Activated B cell treated with CpG ODN at 0.5 μM for 24 hours (primary cell): ENCODE measurements at regions of chr4 and their contacts with region 1.

Region 1: DNA sequence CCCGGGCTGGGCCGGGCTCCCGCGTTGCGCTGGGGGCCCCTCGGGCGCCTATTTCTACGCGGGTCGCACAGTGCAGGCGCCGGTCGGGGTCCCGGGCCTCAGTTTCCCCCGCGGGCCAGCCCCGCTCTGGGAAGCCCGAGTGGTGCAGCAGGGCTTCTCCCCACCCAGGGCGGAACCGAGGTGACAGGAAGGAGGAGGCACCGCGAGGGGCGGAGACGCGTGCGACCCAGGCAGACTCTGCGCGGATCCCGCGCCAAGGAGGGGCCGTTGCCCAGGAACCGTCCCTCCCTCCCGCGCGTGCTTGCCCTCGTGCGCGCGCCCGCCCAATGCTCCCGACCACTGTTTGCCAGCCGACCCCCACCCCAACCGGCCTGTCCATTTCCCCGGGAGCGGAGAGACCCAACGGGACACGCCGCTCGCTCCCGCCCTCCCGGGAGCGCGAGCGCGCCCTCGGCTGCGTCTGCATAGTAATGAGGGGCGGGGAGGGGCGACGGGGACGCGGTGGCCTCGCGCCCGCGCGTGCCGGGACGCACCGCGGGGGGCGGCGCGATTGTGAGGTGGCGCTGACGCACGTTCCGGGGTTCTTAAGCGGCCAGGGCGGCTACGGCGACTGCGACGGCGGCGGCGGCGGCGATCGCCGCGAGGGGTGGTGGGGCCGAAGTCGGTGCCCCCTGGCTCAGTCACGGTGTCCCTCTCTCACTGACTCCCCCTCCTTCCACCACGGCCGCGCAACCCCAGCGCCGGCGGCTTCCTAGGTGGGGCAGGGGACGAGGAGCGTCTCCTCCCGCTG is at the start of gene CPEB2:
- DNase-seq: peak; percentile 92
- ATAC-seq: peak; percentile 69
- H3K4me3 Mint-ChIP-seq: peak within 1 kb of the TSS; percentile 93
- H3K27ac Mint-ChIP-seq: peak within 1 kb of the TSS; percentile 96
- H3K4me1 Mint-ChIP-seq: peaks cover 23% of the 10 kb centered on the region
- H3K27me3 Mint-ChIP-seq: no peaks in the 10 kb centered on the region
- CTCF ChIP-seq: no peak
- total RNA-seq, gene CPEB2: 6.9 and 7.2 TPM in 2 replicates

Region 2: DNA sequence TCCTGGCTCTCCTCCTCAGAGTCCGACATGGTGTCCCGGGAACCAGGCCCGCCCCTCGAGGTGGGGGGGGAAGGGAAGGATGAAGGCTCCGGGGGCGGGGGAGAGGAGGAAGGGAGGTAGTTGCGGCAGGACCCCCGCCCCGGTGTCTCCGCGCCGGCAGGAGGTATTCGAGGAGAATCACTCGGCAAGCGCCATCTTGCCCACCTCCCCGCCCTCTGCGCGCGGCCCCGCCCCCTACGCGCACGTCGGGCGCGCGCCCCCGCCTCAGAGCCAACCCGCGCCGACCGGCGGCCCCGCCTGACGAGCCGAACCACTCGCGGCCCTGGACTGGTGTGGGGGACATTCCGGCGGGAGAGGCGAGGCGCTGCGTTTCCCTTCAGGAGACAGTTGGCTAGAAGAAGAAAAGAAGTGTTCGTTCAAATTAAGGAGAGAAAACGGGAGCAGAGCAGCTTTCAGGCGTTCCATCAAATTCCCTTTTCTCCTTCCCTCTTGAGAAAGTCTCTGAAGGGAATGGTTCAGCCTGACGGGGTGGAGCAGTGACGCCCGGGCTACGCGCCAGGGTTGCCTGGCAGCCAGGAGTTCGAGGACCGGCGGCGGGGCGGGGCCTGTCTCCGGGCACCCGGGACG is 1517.8 kb before region 1 on chr4 and contains the start of gene RAB28:
- CTCF ChIA-PET with region 1: no interaction called
- POLR2A ChIA-PET with region 1: no interaction called
- intact Hi-C with region 1: loop called (anchors 1 kb)
- DNase-seq: peak; percentile 93
- ATAC-seq: peak; percentile 93
- H3K4me3 Mint-ChIP-seq: peak within 1 kb of the TSS; percentile 96
- H3K27ac Mint-ChIP-seq: peak within 1 kb of the TSS; percentile 99
- H3K4me1 Mint-ChIP-seq: peaks cover 21% of the 10 kb centered on the region
- H3K27me3 Mint-ChIP-seq: peaks cover 14% of the 10 kb centered on the region
- CTCF ChIP-seq: no peak
- total RNA-seq, gene RAB28: 16.0 and 16.9 TPM in 2 replicates

Region 3: DNA sequence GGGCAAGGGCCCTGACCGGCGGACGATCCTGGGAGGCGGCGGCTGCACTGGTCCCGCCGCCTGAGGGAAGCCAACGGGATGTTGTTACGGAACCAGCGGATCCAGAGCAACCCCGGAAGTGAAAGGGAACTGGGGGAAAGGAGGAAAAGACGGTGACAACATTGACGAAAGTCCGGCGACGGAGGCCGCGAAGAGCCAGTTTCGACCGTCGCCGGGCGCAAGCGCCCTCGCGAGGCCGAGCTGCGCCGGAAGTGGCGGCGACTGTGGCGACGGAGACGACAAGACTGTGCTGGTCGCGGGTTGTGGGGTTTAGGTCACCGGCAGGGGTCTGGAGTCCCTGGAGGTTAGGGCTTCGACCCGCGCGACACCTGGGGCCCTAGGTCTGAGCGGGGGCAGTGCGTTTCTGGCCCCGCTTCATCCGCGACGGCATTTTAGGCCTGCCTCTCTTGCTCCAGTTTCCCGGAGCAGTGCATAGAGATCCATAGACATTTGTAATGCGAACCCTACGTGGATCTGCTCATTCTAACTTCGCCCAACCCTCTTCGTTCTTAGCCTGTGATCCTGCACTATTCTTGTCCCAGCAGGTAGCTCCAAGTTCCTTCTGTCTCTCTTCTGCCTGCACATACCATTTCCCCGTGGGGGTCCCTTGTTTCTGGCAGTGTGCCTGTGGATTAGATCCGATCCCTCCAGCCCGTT is 1374.3 kb before region 1 on chr4 and contains the start of gene BOD1L1:
- CTCF ChIA-PET with region 1: no interaction called
- POLR2A ChIA-PET with region 1: interaction called, 9 read pairs
- intact Hi-C with region 1: loop called (anchors 1 kb)
- DNase-seq: peak; percentile 80
- ATAC-seq: peak; percentile 86
- H3K4me3 Mint-ChIP-seq: peak within 1 kb of the TSS; percentile 98
- H3K27ac Mint-ChIP-seq: peak within 1 kb of the TSS; percentile 97
- H3K4me1 Mint-ChIP-seq: peaks cover 53% of the 10 kb centered on the region
- H3K27me3 Mint-ChIP-seq: no peaks in the 10 kb centered on the region
- CTCF ChIP-seq: no peak
- total RNA-seq, gene BOD1L1: 77.1 and 79.3 TPM in 2 replicates

Region 4: DNA sequence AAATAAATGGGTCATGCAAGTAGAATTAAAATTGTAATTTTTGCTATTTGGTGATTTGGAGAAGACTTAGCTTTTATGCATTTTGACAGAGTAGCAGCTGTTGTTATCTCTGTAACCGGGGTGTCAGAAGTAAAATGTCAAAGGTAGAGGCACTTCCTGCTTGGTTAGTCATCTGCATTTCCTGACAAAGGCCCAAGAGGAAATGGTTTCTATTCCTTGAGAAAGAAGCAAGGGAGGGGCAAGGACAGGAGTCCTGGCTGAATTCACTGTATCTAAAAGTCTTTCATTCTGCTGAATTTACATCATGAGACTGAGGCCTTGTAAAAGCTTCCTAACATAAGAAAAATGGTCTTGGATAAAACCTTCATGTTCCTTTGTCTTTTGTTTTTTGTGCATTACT is 823.6 kb before region 1 on chr4:
- CTCF ChIA-PET with region 1: no interaction called
- POLR2A ChIA-PET with region 1: interaction called, 3 read pairs
- intact Hi-C with region 1: loop called (anchors 1 kb)
- DNase-seq: no peak
- ATAC-seq: peak; percentile 62
- H3K4me3 Mint-ChIP-seq: peak overlapping the region; percentile 67
- H3K27ac Mint-ChIP-seq: peak overlapping the region; percentile 89
- H3K4me1 Mint-ChIP-seq: peaks cover 85% of the 10 kb centered on the region
- H3K27me3 Mint-ChIP-seq: no peaks in the 10 kb centered on the region
- CTCF ChIP-seq: no peak

Region 5: DNA sequence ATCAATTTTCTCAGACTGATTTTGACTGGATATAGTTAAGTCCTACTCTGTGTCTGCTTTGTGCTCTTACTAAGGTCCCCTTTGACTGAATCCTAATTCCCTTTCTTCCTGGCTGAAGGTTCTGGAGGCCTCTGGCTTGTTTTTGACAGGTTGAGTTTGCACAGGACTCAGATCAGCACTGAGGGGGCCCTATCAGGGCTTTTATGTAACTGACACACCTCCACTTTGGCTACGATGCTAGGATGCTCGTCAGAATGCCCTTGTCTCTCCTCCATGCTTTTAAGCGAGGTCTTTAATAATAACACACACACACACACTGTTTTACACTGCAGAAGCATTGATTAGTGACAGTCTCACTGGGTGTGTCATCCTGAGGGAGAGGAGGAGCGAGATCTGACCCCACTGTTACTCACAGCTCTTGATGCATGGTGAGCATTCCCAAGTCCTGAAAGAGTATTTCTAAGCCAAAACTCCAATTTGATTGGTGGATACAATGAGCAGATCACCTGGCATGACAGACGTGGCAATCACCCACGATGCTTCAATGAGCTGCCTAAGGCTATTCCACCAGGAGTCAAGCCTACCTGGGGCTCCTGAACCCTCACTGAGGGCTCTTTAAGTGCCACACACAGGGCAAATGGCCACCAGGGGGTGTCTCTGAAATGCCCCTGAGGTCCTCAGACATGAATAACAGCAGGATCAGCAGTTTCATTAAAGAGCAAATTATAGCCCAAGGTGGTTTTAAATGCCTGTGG is 130.2 kb before region 1 on chr4:
- CTCF ChIA-PET with region 1: no interaction called
- POLR2A ChIA-PET with region 1: no interaction called
- intact Hi-C with region 1: loop called (anchors 2 kb)
- DNase-seq: no peak
- ATAC-seq: no peak
- H3K4me3 Mint-ChIP-seq: no peak overlapping the region
- H3K27ac Mint-ChIP-seq: no peak overlapping the region
- H3K4me1 Mint-ChIP-seq: peaks cover under 1% of the 10 kb centered on the region
- H3K27me3 Mint-ChIP-seq: peaks cover 12% of the 10 kb centered on the region
- CTCF ChIP-seq: no peak

Region 6: GRCh38 chr4:15655229-15656037 is 653.4 kb after region 1 on chr4 and contains the start of gene FBXL5:
- CTCF ChIA-PET with region 1: no interaction called
- POLR2A ChIA-PET with region 1: interaction called, 14 read pairs
- intact Hi-C with region 1: loop called (anchors 1 kb)
- DNase-seq: peak; percentile 89
- ATAC-seq: peak; percentile 82
- H3K4me3 Mint-ChIP-seq: peak within 1 kb of the TSS; percentile 95
- H3K27ac Mint-ChIP-seq: peak within 1 kb of the TSS; percentile 97
- H3K4me1 Mint-ChIP-seq: peaks cover 42% of the 10 kb centered on the region
- H3K27me3 Mint-ChIP-seq: no peaks in the 10 kb centered on the region
- CTCF ChIP-seq: no peak
- total RNA-seq, gene FBXL5: 29.9 and 32.1 TPM in 2 replicates

Region 7: GRCh38 chr4:16225863-16226815 is 1224.1 kb after region 1 on chr4 and contains the start of gene TAPT1:
- CTCF ChIA-PET with region 1: no interaction called
- POLR2A ChIA-PET with region 1: no interaction called
- intact Hi-C with region 1: loop called (anchors 1 kb)
- DNase-seq: peak; percentile 74
- ATAC-seq: peak; percentile 77
- H3K4me3 Mint-ChIP-seq: peak within 1 kb of the TSS; percentile 97
- H3K27ac Mint-ChIP-seq: peak within 1 kb of the TSS; percentile 98
- H3K4me1 Mint-ChIP-seq: peaks cover 69% of the 10 kb centered on the region
- H3K27me3 Mint-ChIP-seq: no peaks in the 10 kb centered on the region
- CTCF ChIP-seq: no peak
- total RNA-seq, gene TAPT1: 30.0 and 35.0 TPM in 2 replicates